Left cardiac atrium (tissue), 4 donors: ENCODE measurements at regions of chr4 and their contacts with region 1.

Region 1: DNA sequence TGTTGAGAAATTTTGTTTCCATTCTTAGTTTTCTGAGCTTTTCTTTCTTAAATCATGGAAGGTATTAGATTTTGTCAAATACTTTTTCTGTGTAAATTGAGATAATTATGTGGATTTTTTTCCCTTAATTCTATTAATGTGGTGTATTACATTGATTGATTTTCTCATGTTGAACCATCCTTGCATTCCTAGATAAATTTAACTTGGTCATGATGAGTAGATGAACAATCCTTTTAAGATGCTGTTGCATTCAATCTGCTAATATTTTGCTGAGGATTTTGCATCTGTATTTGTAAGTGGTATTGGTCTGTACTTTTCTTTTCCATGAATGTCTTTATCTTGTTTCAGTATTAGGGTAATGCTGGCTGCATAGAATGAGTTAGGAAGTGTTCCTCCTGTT is 20.3 kb upstream of the CTBP1 start:
- DNase-seq: no peak
- ATAC-seq: no peak

Region 2: DNA sequence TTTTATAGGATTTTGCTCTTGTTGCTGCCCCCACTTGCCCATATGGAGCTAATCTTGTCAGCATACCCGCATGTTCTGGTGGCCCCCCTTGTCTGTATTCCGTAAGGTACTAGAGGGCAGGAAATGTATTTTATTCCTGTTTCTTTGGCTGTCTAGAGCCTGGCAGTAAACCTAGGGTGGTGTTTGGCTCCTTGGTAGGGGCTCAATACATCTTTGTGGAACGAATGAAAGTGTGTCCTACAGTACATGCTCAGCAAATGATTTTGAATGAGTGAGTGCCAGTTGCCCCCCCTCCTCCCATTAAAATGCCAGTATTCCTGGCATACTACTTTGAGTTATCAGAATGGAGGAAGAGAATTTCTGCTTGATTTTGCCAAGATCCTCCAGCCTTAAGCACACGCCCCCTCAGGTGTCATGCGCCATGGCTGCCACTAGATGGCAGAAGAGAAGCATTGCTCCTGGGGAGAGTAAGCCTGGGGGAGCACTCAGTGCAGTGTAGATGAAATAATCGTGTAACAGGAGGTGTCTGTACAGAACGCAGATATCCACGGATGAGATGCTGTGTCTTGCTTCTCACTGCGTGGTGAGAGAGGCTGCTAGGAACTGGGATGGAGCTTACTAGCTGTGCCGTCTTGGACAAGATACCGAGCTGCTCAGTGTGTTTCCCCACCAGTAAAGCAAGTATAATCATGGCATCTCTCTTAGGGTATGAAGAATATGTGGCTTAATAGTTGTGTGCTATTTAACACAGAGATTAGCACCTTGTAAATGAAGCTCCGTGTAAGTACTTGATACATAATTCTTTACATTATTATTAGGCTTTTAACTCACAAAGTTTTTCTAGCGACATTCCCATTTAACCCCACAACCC is 138.7 kb before region 1 on chr4:
- intact Hi-C with region 1: loop called in 1 of 2 experiments (anchors 2 kb)
- DNase-seq: peak; percentile 68
- ATAC-seq: peak; percentile 97 to 98